Pancreas (tissue), 10 donors: ENCODE measurements at regions of chr6 and their contacts with region 1.

Region 1: DNA sequence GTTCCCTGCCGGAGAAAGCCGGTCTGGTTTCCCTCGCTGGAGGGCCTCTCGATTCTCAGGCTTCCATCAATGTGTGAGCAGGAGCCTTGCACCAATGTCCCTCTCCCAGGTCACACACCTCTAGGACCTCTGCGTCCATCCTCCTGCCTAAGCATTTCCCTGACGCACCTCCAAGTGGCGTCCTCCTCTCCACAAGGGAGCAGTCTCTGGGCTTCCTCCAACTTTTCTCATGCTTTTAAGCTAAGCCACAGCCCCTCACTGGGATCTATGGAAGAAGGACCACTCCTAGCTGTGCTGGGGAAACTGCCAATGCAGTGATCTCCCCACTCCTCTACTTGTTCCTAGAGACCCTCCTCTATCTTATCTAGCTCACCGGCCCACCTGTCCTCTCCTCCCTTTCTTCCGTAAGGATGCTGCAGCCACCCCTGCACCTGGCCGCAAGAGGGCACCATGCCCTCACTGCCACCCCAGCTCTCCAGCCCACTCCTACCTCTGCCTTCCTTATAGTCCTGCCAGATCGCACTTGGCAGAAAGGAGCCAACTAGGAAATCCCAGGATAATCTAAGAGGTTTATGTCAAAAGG is 258.7 kb downstream of the LRFN2 start:
- DNase-seq: peak; percentile 60 to 90 (median 80)
- ATAC-seq: peak; percentile 96 to 99 (median 98)
- H3K4me3 ChIP-seq: no peak overlapping the region
- H3K27ac ChIP-seq: no peak overlapping the region
- H3K4me1 ChIP-seq: no peaks in the 10 kb centered on the region
- H3K27me3 ChIP-seq: no peaks in the 10 kb centered on the region
- CTCF ChIP-seq: peak; percentile 70 to 89 (median 80)

Region 2: GRCh38 chr6:40472353-40472752 is 143.9 kb after region 1 on chr6:
- intact Hi-C with region 1: no loop called
- DNase-seq: no peak
- ATAC-seq: no peak
- H3K4me3 ChIP-seq: no peak overlapping the region
- H3K27ac ChIP-seq: no peak overlapping the region
- H3K4me1 ChIP-seq: no peaks in the 10 kb centered on the region
- H3K27me3 ChIP-seq: no peaks in the 10 kb centered on the region
- CTCF ChIP-seq: no peak

Region 3: GRCh38 chr6:40587240-40588069 is 259.0 kb after region 1 on chr6 and contains the start of gene LRFN2:
- intact Hi-C with region 1: loop called in 1 of 3 experiments (anchors 10 kb)
- DNase-seq: peak; percentile 69 to 94 (median 88)
- ATAC-seq: peak; percentile 97 to 98 (median 97)
- H3K4me3 ChIP-seq: peak within 1 kb of the TSS; percentile 26 to 52 (median 31)
- H3K27ac ChIP-seq: peak within 1 kb of the TSS; percentile 62 to 67 (median 64)
- H3K4me1 ChIP-seq: peaks cover 0 to 10% (median 0%) of the 10 kb centered on the region in 3 donors
- H3K27me3 ChIP-seq: no peaks in the 10 kb centered on the region
- CTCF ChIP-seq: peak; percentile 48 to 76 (median 60)
- total RNA-seq, gene LRFN2: 0.22 to 0.67 (median 0.53) TPM

Region 4: GRCh38 chr6:40832691-40833090 is 504.2 kb after region 1 on chr6:
- intact Hi-C with region 1: loop called in 1 of 3 experiments (anchors 10 kb)
- DNase-seq: no peak
- ATAC-seq: no peak
- H3K4me3 ChIP-seq: no peak overlapping the region
- H3K27ac ChIP-seq: no peak overlapping the region
- H3K4me1 ChIP-seq: no peaks in the 10 kb centered on the region
- H3K27me3 ChIP-seq: no peaks in the 10 kb centered on the region
- CTCF ChIP-seq: no peak

Region 5: GRCh38 chr6:40912158-40912946 is 583.9 kb after region 1 on chr6:
- intact Hi-C with region 1: no loop called
- DNase-seq: peak in 5 of 6 donors; percentile 62 to 74 (median 71)
- ATAC-seq: peak; percentile 92 to 98 (median 98)
- H3K4me3 ChIP-seq: no peak overlapping the region
- H3K27ac ChIP-seq: peak overlapping the region; percentile 56 to 76 (median 66)
- H3K4me1 ChIP-seq: peaks cover 0 to 7% (median 4%) of the 10 kb centered on the region in 3 donors
- H3K27me3 ChIP-seq: no peaks in the 10 kb centered on the region
- CTCF ChIP-seq: peak; percentile 24 to 59 (median 40)